Naive thymus-derived CD4-positive, alpha-beta T cell (primary cell): ENCODE measurements at regions of chr21 and their contacts with region 1.

Region 1: DNA sequence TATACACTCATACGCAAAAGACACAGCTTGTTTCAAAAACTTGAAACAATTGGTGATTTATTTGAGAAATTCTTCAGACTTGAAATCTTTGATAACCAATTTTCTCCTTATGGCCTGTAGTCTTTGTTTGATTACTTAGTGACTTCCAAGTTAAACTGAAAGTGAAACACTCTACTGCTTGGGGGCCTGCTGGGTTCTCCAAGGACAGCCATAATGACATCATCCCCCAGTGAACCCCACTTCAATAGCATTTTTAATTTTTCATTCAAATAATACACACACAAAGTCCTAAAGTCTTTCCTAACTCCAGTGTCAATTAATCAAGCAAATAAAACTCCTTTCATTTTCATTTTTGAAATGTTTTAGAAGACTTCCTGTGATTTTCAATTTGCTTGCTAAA is 59.2 kb downstream of the KRTAP19-8 start:
- DNase-seq: peak in 3 of 9 donors; percentile 2 to 11 (median 7)
- ATAC-seq: no peak
- H3K4me3 ChIP-seq: peak overlapping the region; percentile 10
- H3K4me3 Mint-ChIP-seq: peak overlapping the region; percentile 26 to 71 (median 64)
- H3K27ac ChIP-seq: no peak overlapping the region
- H3K27ac Mint-ChIP-seq: peak overlapping the region in 6 of 9 donors; percentile 11 to 74 (median 44)
- H3K4me1 ChIP-seq: no peaks in the 10 kb centered on the region
- H3K4me1 Mint-ChIP-seq: peaks cover 6 to 29% (median 15%) of the 10 kb centered on the region in 7 donors
- H3K27me3 ChIP-seq: no peaks in the 10 kb centered on the region
- H3K27me3 Mint-ChIP-seq: peaks cover 0 to 4% (median 2%) of the 10 kb centered on the region in 5 donors

Region 2: GRCh38 chr21:30200000-30200399 is 779.1 kb before region 1 on chr21:
- CTCF ChIA-PET with region 1: no interaction called
- POLR2A ChIA-PET with region 1: no interaction called
- intact Hi-C with region 1: no loop called
- DNase-seq: no peak
- ATAC-seq: no peak
- H3K4me3 ChIP-seq: no peak overlapping the region
- H3K4me3 Mint-ChIP-seq: no peak overlapping the region
- H3K27ac ChIP-seq: no peak overlapping the region
- H3K27ac Mint-ChIP-seq: no peak overlapping the region
- H3K4me1 ChIP-seq: no peaks in the 10 kb centered on the region
- H3K4me1 Mint-ChIP-seq: no peaks in the 10 kb centered on the region
- H3K27me3 ChIP-seq: no peaks in the 10 kb centered on the region
- H3K27me3 Mint-ChIP-seq: no peaks in the 10 kb centered on the region

Region 3: GRCh38 chr21:30434033-30434631 is 544.9 kb before region 1 on chr21:
- CTCF ChIA-PET with region 1: no interaction called
- POLR2A ChIA-PET with region 1: no interaction called
- intact Hi-C with region 1: no loop called
- DNase-seq: no peak
- ATAC-seq: no peak
- H3K4me3 ChIP-seq: no peak overlapping the region
- H3K4me3 Mint-ChIP-seq: no peak overlapping the region
- H3K27ac ChIP-seq: no peak overlapping the region
- H3K27ac Mint-ChIP-seq: no peak overlapping the region
- H3K4me1 ChIP-seq: no peaks in the 10 kb centered on the region
- H3K4me1 Mint-ChIP-seq: no peaks in the 10 kb centered on the region
- H3K27me3 ChIP-seq: no peaks in the 10 kb centered on the region
- H3K27me3 Mint-ChIP-seq: peaks cover 0 to 27% (median 9%) of the 10 kb centered on the region in 5 donors

Region 4: GRCh38 chr21:31012133-31013089 is 33.4 kb after region 1 on chr21:
- CTCF ChIA-PET with region 1: no interaction called
- POLR2A ChIA-PET with region 1: no interaction called
- intact Hi-C with region 1: loop called in 1 of 2 experiments (anchors 5 kb)
- DNase-seq: no peak
- ATAC-seq: no peak
- H3K4me3 ChIP-seq: peak overlapping the region; percentile 0
- H3K4me3 Mint-ChIP-seq: peak overlapping the region in 9 of 10 donors; percentile 15 to 68 (median 51)
- H3K27ac ChIP-seq: peak overlapping the region; percentile 34
- H3K27ac Mint-ChIP-seq: peak overlapping the region; percentile 14 to 79 (median 71)
- H3K4me1 ChIP-seq: peaks cover 6 to 31% of the 10 kb centered on the region in 2 donors
- H3K4me1 Mint-ChIP-seq: peaks cover 8 to 28% (median 21%) of the 10 kb centered on the region in 7 donors
- H3K27me3 ChIP-seq: no peaks in the 10 kb centered on the region
- H3K27me3 Mint-ChIP-seq: peaks cover 0 to 20% (median 0%) of the 10 kb centered on the region in 5 donors

Region 5: DNA sequence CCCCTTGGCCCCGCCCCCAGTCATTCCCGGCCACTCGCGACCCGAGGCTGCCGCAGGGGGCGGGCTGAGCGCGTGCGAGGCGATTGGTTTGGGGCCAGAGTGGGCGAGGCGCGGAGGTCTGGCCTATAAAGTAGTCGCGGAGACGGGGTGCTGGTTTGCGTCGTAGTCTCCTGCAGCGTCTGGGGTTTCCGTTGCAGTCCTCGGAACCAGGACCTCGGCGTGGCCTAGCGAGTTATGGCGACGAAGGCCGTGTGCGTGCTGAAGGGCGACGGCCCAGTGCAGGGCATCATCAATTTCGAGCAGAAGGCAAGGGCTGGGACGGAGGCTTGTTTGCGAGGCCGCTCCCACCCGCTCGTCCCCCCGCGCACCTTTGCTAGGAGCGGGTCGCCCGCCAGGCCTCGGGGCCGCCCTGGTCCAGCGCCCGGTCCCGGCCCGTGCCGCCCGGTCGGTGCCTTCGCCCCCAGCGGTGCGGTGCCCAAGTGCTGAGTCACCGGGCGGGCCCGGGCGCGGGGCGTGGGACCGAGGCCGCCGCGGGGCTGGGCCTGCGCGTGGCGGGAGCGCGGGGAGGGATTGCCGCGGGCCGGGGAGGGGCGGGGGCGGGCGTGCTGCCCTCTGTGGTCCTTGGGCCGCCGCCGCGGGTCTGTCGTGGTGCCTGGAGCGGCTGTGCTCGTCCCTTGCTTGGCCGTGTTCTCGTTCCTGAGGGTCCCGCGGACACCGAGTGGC is 680.6 kb after region 1 on chr21 and contains the start of gene SOD1:
- CTCF ChIA-PET with region 1: no interaction called
- POLR2A ChIA-PET with region 1: no interaction called
- intact Hi-C with region 1: no loop called
- DNase-seq: peak in 8 of 9 donors; percentile 20 to 98 (median 97)
- ATAC-seq: peak; percentile 97
- H3K4me3 ChIP-seq: peak within 1 kb of the TSS; percentile 79
- H3K4me3 Mint-ChIP-seq: peak within 1 kb of the TSS; percentile 95 to 100 (median 100)
- H3K27ac ChIP-seq: peak within 1 kb of the TSS; percentile 88
- H3K27ac Mint-ChIP-seq: peak within 1 kb of the TSS; percentile 97 to 100 (median 98)
- H3K4me1 ChIP-seq: peaks cover 15 to 50% of the 10 kb centered on the region in 2 donors
- H3K4me1 Mint-ChIP-seq: peaks cover 40 to 80% (median 68%) of the 10 kb centered on the region in 7 donors
- H3K27me3 ChIP-seq: no peaks in the 10 kb centered on the region
- H3K27me3 Mint-ChIP-seq: no peaks in the 10 kb centered on the region
- total RNA-seq, gene SOD1: 110 to 218 (median 182) TPM